GM12878 (cell line): ENCODE measurements at regions of chr5 and their contacts with region 1.

Region 1: GRCh38 chr5:171999877-172000276 is 6.6 kb downstream of the FBXW11 start:
- DNase-seq: peak; percentile 57
- ATAC-seq: peak; percentile 70
- H3K4me3 ChIP-seq: peak overlapping the region; percentile 23; the same call in 1 of the 2 replicates
- H3K27ac ChIP-seq: peak overlapping the region; percentile 22
- H3K4me1 ChIP-seq: peaks cover 45% of the 10 kb centered on the region
- H3K27me3 ChIP-seq: no peaks in the 10 kb centered on the region
- CTCF ChIP-seq: no peak
- EP300 ChIP-seq: no peak
- POLR2A ChIP-seq: no peak
- RAD21 ChIP-seq: no peak

Region 2: DNA sequence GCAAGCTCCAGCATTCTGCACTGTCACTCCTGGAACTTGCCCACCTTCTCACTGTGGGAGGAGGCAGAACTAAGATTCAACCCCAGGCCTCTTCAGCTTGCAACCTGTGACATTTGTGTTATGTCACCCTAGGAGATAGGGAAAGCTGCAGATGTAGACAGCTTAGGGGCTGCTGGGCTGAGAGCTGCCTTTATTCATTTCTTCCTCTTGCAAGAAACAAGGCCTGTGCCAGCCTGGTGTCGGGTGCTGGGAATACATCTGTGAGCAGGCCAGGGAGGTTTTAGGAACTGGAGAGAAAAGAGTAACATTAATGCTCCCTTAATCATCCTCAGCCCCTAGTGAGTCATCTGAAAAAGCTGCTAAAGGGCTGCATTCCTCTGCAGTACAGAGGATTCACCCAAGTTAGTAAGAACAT is 478.7 kb before region 1 on chr5:
- CTCF ChIA-PET with region 1: no interaction called
- POLR2A ChIA-PET with region 1: no interaction called
- RAD21 ChIA-PET with region 1: no interaction called
- SMC1A ChIA-PET with region 1: no interaction called
- in situ Hi-C with region 1: no loop called
- intact Hi-C with region 1: no loop called
- DNase-seq: no peak
- ATAC-seq: no peak
- H3K4me3 ChIP-seq: no peak overlapping the region
- H3K27ac ChIP-seq: no peak overlapping the region
- H3K4me1 ChIP-seq: no peaks in the 10 kb centered on the region
- H3K27me3 ChIP-seq: peaks cover 0 to 6% of the 10 kb centered on the region in 2 experiments; a peak in 2 of 4 replicates
- CTCF ChIP-seq: no peak
- EP300 ChIP-seq: no peak
- POLR2A ChIP-seq: no peak
- RAD21 ChIP-seq: no peak

Region 3: DNA sequence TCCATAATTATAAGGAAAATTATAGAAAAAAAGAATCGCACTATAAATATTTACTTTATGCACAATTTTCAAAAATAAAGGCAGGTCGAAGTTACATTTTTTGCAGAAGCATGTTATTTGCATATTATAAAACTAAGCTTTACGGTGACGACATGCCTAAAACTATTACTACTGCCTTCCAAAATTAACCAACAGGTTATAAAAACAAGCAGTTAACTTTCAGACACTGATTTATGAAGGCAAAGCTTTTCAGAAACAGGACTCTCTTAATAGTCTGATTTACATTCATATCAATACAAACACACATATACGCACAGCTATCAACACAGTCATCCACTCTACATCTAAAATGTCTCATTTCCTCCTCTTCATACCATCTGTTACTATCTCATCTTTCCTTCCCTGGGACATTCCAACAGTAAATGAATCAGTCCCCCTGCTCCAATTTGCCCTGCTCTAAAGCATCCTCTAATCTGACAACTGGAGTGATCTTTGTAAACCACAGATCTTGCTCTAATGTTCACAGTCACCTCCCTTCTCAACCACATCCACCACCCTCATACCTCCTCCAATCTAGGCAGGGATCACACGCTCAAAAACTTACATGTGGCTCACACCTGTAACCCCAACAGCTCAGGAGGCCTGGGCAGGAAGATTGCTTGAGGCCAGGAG is 15.0 kb before region 1 on chr5:
- CTCF ChIA-PET with region 1: no interaction called
- POLR2A ChIA-PET with region 1: interaction called, 6 read pairs
- RAD21 ChIA-PET with region 1: interaction called, 13 read pairs
- SMC1A ChIA-PET with region 1: interaction called, 52 read pairs
- in situ Hi-C with region 1: no loop called
- intact Hi-C with region 1: no loop called
- DNase-seq: no peak
- ATAC-seq: peak; percentile 61
- H3K4me3 ChIP-seq: no peak overlapping the region
- H3K27ac ChIP-seq: peak overlapping the region; percentile 40; the same call in 1 of the 2 replicates
- H3K4me1 ChIP-seq: peaks cover 53% of the 10 kb centered on the region
- H3K27me3 ChIP-seq: no peaks in the 10 kb centered on the region
- CTCF ChIP-seq: no peak
- EP300 ChIP-seq: no peak
- POLR2A ChIP-seq: no peak
- RAD21 ChIP-seq: no peak